ENCODE measurements at regions of chr11 and their contacts with region 1.

Region 1: GRCh38 chr11:5808500-5809121 is at the start of gene OR52N2:
- DNase-seq: peak; percentile 82
- H3K4me3 Mint-ChIP-seq: peak within 1 kb of the TSS; percentile 85
- H3K27ac Mint-ChIP-seq: peak within 1 kb of the TSS; percentile 49
- H3K4me1 Mint-ChIP-seq: peaks cover 5% of the 10 kb centered on the region
- H3K27me3 Mint-ChIP-seq: peaks cover 8% of the 10 kb centered on the region
- total RNA-seq, gene OR52N2: not detected

Region 2: DNA sequence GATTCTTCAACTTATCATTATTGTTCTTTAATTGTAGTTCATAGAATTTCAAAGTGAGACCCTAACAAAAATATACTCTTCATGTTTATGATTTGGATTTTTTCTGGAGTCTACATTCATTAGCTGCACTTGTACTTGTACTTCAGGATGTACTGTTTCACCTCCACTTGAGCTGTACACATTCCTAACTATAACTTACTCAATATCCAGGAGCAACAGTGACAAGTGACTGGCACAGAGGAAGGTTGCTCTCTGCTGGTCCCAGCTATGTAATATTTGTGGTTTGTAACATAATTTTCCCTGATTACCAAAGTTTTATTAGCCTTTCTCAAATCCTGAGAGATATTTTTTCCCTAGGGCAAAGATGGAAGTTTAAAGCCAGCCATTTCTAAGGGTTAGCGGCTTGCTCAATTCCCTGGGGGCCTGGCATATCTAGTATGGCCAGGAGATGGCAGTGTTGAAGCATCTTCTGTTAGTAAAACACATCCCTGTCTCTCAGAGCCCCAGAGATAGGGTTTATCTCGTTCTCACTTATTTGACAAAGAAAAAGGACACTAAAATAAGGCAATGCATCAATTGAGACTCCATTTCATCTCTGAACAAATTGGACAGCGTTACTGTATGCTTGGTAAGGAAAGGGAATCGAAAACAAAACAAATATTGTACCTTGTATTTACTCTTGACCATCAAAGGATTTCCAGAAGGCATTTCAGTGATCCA is 684.6 kb before region 1 on chr11:
- CTCF ChIA-PET with region 1: interaction called, 5 read pairs
- POLR2A ChIA-PET with region 1: no interaction called
- intact Hi-C with region 1: loop called (anchors 1 kb)
- DNase-seq: peak; percentile 62
- H3K4me3 Mint-ChIP-seq: no peak overlapping the region
- H3K27ac Mint-ChIP-seq: no peak overlapping the region
- H3K4me1 Mint-ChIP-seq: no peaks in the 10 kb centered on the region
- H3K27me3 Mint-ChIP-seq: peaks cover 8% of the 10 kb centered on the region

Region 3: GRCh38 chr11:5476184-5476819 is 332.3 kb before region 1 on chr11:
- CTCF ChIA-PET with region 1: interaction called, 18 read pairs
- POLR2A ChIA-PET with region 1: no interaction called
- intact Hi-C with region 1: loop called (anchors 1 kb)
- DNase-seq: peak; percentile 42
- H3K4me3 Mint-ChIP-seq: no peak overlapping the region
- H3K27ac Mint-ChIP-seq: no peak overlapping the region
- H3K4me1 Mint-ChIP-seq: no peaks in the 10 kb centered on the region
- H3K27me3 Mint-ChIP-seq: peaks cover 21% of the 10 kb centered on the region

Region 4: GRCh38 chr11:5600374-5600851 is 208.2 kb before region 1 on chr11:
- CTCF ChIA-PET with region 1: interaction called, 9 read pairs
- POLR2A ChIA-PET with region 1: no interaction called
- intact Hi-C with region 1: loop called (anchors 1 kb)
- DNase-seq: peak; percentile 72
- H3K4me3 Mint-ChIP-seq: no peak overlapping the region
- H3K27ac Mint-ChIP-seq: no peak overlapping the region
- H3K4me1 Mint-ChIP-seq: peaks cover 8% of the 10 kb centered on the region
- H3K27me3 Mint-ChIP-seq: peaks cover 8% of the 10 kb centered on the region

Region 5: DNA sequence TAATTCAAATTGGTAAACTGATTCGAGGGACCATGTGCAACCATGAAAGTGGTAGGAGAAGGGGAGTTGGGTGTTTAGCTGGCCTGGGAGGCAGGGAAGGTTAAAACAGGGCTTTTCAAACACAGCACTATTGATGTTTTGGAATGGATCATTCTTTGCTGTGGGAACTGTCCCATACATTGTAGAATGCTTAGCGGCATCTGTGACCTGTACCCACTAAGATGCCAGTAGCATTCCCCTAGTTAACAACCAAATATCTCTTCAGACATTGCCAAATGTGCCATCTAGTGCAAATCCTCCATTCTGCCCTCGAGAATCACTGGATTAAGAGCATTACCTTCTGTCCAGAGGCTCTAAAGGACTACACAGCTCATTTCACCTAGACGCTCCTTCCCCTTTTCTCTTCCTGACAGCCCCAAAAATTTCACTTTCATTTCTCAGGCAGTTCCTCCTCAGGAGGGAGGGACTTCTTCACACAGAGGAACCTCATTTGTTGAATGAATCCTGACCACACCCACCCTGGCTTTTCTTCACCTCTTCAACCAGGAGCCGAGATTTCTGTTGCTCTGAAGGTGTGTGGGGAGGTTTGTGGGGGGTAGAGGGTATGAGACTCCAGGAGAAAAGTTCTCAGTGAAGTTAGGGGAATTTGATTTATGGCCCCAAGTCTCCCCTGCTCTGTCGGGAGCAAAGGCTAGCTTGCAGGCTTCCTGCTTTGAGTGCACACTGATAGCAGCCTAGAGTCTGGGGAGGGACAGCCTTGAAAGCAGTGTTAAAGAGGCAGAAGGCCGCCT is 183.9 kb before region 1 on chr11 and contains the start of gene TRIM34:
- CTCF ChIA-PET with region 1: no interaction called
- POLR2A ChIA-PET with region 1: no interaction called
- intact Hi-C with region 1: loop called (anchors 1 kb)
- DNase-seq: peak; percentile 70
- H3K4me3 Mint-ChIP-seq: peak within 1 kb of the TSS; percentile 98
- H3K27ac Mint-ChIP-seq: peak within 1 kb of the TSS; percentile 92
- H3K4me1 Mint-ChIP-seq: peaks cover 36% of the 10 kb centered on the region
- H3K27me3 Mint-ChIP-seq: no peaks in the 10 kb centered on the region
- total RNA-seq, gene TRIM34: 9.6 to 11.9 TPM

Region 6: DNA sequence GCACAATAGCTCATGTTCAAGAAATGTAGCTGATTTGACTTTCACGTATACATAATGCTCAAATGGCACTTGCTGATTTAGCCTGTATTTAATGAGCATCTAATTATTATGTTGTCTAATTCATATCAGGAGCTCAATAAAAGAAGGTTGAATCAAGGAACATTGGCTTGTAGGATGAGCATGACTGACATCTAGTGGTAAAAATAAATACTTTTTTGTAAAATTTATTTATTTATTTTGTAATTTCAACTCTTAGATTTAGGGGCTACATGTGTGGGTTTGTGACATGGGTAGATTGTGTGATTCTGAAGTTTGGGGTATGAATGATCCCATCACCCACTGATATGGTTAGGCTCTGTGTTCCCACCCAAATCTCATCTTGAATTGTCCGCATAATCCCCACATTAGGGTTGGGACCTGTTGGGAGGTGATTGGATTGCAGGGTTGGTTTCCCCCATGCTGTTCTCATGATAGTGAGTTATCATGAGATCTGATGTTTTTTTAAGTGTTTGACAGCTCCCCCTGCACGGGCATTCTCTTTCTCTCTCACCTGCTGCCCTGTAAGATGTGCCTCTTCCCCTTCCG is 82.7 kb after region 1 on chr11:
- CTCF ChIA-PET with region 1: interaction called, 3 read pairs
- POLR2A ChIA-PET with region 1: no interaction called
- intact Hi-C with region 1: loop called (anchors 5 kb)
- DNase-seq: no peak
- H3K4me3 Mint-ChIP-seq: no peak overlapping the region
- H3K27ac Mint-ChIP-seq: no peak overlapping the region
- H3K4me1 Mint-ChIP-seq: no peaks in the 10 kb centered on the region
- H3K27me3 Mint-ChIP-seq: peaks cover 2% of the 10 kb centered on the region

Region 7: DNA sequence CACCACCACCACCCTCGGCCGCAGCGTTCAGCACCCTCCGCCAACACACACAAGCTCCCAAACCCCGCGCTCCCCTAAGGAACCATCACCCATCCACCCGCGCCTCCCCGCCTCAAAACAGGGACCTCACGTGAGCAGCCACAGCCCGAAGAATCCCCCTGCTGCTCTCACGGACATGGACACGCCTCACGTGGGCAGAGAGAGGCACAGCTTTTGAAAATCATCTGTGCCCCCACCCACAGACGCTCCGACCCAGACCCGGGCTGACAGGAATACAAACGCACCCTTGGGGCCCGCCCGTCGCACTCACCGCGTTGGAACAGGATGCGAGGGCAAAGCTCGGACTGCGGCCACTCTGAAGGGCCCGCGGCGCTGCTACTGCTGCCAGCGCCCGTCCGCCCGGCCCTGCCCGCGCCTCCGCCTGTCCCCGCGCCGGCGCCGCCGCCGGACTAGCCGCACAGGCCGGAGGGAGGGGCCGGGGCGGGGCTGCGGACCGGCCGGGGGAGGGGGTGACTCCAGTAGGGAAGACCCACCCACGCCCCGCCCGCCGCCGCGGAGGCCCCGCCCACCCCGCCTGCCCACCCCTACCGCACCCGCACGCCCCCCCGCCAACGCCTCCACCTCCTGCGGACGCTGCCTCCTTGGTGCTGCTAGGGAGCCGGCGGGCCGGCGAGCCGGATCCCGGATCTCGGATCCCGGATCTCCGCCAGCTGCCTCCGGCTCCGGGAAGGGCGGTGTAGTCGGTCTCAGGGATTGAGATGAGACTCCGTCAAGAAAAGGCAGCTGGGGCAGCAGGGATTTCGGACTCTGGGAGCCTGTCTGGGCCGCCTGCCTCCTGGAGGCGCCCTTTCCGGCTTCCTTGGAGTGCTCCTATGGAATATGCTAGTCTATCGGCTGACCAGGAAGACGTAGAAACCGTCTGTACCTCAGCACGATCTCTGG is 665.1 kb after region 1 on chr11 and contains the start of gene TRIM3:
- CTCF ChIA-PET with region 1: no interaction called
- POLR2A ChIA-PET with region 1: no interaction called
- intact Hi-C with region 1: no loop called
- DNase-seq: peak; percentile 75
- H3K4me3 Mint-ChIP-seq: peak within 1 kb of the TSS; percentile 80
- H3K27ac Mint-ChIP-seq: peak within 1 kb of the TSS; percentile 31
- H3K4me1 Mint-ChIP-seq: peaks cover 24% of the 10 kb centered on the region
- H3K27me3 Mint-ChIP-seq: no peaks in the 10 kb centered on the region
- total RNA-seq, gene TRIM3: 6.4 to 8.0 TPM

Measured in activated CD4-positive, alpha-beta memory T cell treated with anti-CD3 and anti-CD28 coated beads for 36 hours (primary cell).